ENCODE measurements at regions of chr3 and their contacts with region 1.

Region 1: DNA sequence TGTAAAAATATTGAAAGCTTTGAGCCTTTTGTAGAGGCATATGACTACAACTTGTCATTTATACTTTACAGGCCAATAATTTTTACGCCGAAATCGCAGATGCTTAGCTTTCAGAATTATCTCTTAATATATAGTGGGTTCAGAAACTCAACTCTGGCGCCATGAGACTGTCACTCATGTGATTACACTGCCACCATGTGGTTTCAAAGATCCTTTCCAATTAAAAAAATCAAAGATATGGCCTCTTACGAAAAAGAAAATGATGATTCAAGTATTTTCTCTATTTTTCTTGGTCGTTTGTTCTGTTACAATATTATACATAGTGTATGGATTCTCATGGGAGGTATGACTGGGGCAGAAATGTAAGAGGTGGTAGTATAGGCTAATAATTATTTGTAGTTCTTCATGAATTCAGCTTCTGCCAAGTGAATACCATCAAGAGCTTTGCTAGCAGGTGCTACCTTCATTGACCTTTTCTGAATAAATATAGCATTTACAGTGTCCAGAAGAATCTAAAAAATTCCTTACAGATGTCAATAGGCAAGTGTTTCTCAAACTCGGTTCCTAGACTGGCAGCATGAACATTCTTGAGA is 751.7 kb upstream of the GOLIM4 start:
- DNase-seq: no peak
- ATAC-seq: no peak

Region 2: GRCh38 chr3:168220556-168220955 is 626.8 kb before region 1 on chr3:
- intact Hi-C with region 1: loop called (anchors 10 kb)
- DNase-seq: no peak
- ATAC-seq: no peak

Region 3: GRCh38 chr3:168872826-168873225 is 25.4 kb after region 1 on chr3:
- intact Hi-C with region 1: loop called (anchors 1 kb)
- DNase-seq: no peak
- ATAC-seq: no peak

Region 4: DNA sequence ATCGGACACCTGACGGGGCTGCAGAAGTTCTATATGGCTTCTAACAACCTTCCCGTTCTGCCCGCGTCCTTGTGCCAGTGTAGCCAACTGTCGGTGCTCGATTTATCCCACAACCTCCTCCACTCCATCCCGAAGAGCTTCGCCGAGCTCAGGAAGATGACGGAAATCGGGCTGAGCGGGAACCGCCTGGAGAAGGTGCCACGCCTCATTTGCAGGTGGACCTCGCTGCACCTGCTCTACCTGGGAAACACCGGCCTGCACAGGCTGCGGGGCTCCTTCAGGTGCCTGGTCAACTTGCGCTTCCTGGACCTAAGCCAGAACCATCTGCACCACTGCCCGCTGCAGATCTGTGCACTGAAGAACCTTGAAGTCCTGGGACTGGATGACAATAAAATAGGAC is 975.2 kb after region 1 on chr3:
- intact Hi-C with region 1: no loop called
- DNase-seq: no peak
- ATAC-seq: no peak

Measured in sciatic nerve (tissue), 2 donors.